Ovary (tissue), 10 donors: ENCODE measurements at regions of chr9 and their contacts with region 1.

Region 1: GRCh38 chr9:4356306-4356705 is 56.4 kb upstream of the GLIS3 start:
- DNase-seq: no peak
- H3K4me3 ChIP-seq: no peak overlapping the region
- H3K27ac ChIP-seq: no peak overlapping the region
- H3K4me1 ChIP-seq: no peaks in the 10 kb centered on the region
- H3K27me3 ChIP-seq: peaks cover 2% of the 10 kb centered on the region
- CTCF ChIP-seq: no peak
- EP300 ChIP-seq: no peak
- POLR2A ChIP-seq: no peak

Region 2: GRCh38 chr9:3370715-3371114 is 985.6 kb before region 1 on chr9:
- intact Hi-C with region 1: loop called in 1 of 4 experiments (anchors 5 kb)
- DNase-seq: no peak
- H3K4me3 ChIP-seq: no peak overlapping the region
- H3K27ac ChIP-seq: no peak overlapping the region
- H3K4me1 ChIP-seq: no peaks in the 10 kb centered on the region
- H3K27me3 ChIP-seq: no peaks in the 10 kb centered on the region
- CTCF ChIP-seq: no peak
- EP300 ChIP-seq: no peak
- POLR2A ChIP-seq: no peak

Region 3: GRCh38 chr9:4287886-4288588 is 68.3 kb before region 1 on chr9:
- intact Hi-C with region 1: no loop called
- DNase-seq: no peak
- H3K4me3 ChIP-seq: no peak overlapping the region
- H3K27ac ChIP-seq: no peak overlapping the region
- H3K4me1 ChIP-seq: peaks cover 3% of the 10 kb centered on the region
- H3K27me3 ChIP-seq: no peaks in the 10 kb centered on the region
- CTCF ChIP-seq: no peak
- EP300 ChIP-seq: no peak
- POLR2A ChIP-seq: no peak

Region 4: DNA sequence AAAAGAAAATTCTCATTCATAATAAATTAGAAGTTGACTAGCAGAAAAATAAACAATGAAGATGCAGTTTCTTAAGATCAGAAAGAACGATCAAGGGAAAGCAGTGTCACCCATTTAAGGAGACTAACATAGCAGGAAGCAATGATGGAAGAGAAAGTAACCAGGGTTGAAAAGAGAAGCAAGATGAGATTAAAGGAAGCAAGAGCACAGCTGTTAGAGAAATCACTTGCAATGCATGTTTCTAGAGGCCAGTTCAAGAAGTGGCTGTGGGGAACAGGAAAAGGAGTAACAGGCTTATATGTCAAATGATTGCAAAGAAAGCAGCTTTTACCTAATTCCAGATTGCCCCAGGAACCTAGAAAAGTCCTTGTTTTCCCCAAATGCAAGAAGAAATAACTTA is 87.1 kb after region 1 on chr9:
- intact Hi-C with region 1: no loop called
- DNase-seq: no peak
- H3K4me3 ChIP-seq: no peak overlapping the region
- H3K27ac ChIP-seq: no peak overlapping the region
- H3K4me1 ChIP-seq: no peaks in the 10 kb centered on the region
- H3K27me3 ChIP-seq: no peaks in the 10 kb centered on the region
- CTCF ChIP-seq: no peak
- EP300 ChIP-seq: no peak
- POLR2A ChIP-seq: no peak

Region 5: GRCh38 chr9:4461437-4461836 is 105.1 kb after region 1 on chr9:
- intact Hi-C with region 1: no loop called
- DNase-seq: no peak
- H3K4me3 ChIP-seq: no peak overlapping the region
- H3K27ac ChIP-seq: no peak overlapping the region
- H3K4me1 ChIP-seq: no peaks in the 10 kb centered on the region
- H3K27me3 ChIP-seq: no peaks in the 10 kb centered on the region
- CTCF ChIP-seq: no peak
- EP300 ChIP-seq: no peak
- POLR2A ChIP-seq: no peak